ENCODE measurements at regions of chr15 and their contacts with region 1.

Region 1: DNA sequence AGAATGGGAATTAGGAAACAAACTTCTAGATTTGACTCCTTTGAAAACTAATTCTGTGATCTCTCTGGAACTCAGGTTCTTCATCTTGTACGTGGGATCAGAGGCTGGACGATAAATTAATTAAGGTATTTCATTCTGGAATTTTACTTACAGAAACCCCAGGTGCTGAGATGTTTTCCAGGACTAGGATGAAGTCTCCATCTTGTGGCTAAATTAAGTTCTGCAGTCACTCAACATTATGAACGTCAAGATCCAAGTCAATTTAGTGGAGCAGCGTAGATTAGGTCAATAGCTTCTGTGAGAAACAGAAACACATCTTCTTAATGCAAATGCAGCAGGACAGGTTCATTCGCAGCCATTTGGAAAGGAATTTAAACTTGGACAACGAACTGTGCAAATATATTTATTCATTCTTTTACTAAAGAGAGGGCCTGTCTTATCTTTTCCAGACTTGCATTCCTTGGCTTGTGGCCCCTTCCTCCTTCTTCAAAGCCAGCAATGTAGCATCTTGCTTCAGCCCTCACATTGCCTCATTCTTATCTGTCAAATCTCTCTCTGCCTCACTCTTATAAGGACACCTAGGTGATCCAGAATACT is 26.7 kb upstream of the TMC3 start:
- DNase-seq: no peak
- H3K4me3 ChIP-seq: no peak overlapping the region
- H3K27ac ChIP-seq: no peak overlapping the region
- H3K4me1 ChIP-seq: no peaks in the 10 kb centered on the region
- H3K27me3 ChIP-seq: no peaks in the 10 kb centered on the region
- CTCF ChIP-seq: peak; percentile 56 to 82 (median 70)

Region 2: DNA sequence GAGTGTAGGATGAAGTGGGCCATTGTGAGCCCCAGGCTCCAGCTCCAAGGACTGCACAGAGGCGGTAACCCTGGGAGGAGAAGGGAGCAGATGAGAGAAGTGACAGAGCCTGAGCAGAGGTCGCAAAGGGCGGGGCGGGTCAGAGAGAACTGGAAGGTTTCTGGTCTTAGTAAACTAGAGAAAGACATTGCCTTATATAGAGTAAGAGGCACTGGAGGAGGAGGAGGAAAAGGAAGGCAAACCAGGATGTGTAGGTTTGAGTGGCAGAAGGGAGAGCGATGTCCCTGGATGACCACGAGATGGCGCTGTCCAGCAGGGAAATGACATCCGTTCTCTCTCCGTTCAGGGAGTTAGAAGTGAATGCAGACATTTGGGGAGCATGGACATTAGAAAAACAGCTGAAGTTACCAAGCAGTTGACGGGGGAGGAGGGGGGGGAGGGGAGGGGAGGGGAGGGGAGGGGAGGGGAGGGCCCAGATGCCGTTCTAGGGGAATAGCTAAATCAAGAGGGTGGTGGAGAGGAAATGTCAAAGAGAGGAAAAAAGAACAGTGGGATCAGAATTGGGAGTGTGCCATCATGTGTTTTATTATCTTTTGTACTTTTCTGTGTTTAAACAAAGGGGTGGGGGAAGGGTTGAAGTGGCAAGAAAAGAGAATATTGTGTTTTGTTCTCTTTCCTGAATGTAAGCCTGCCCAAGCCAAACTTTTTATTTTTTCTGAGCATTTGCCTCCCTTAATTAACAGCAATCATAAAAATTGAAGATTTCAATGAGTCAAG is 125.6 kb before region 1 on chr15:
- intact Hi-C with region 1: loop called (anchors 1 kb)
- DNase-seq: peak in 1 of 2 donors; percentile 78
- H3K4me3 ChIP-seq: no peak overlapping the region
- H3K27ac ChIP-seq: peak overlapping the region; percentile 3 to 36
- H3K4me1 ChIP-seq: peaks cover 0 to 8% of the 10 kb centered on the region in 2 donors
- H3K27me3 ChIP-seq: no peaks in the 10 kb centered on the region
- CTCF ChIP-seq: peak; percentile 71 to 87 (median 77)

Region 3: DNA sequence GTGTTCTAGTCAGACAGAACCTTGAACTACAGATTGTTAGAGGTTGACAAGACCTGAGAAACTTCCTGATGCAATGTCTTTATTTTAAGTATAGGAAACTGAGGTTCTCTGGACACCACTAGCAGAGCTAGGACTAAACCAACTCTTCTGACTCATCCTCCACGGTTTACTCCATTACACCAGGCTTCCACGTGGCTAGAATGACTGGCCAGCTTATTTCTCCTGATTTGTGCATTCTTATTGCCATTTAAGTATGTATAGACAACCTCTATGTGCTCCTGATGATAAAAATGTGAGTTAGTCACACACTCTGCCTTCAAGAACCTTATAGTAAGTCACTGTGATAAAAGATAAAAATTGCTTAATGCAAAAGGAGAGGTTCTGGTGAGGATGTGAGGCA is 462.4 kb after region 1 on chr15:
- intact Hi-C with region 1: no loop called
- DNase-seq: no peak
- H3K4me3 ChIP-seq: no peak overlapping the region
- H3K27ac ChIP-seq: no peak overlapping the region
- H3K4me1 ChIP-seq: no peaks in the 10 kb centered on the region
- H3K27me3 ChIP-seq: no peaks in the 10 kb centered on the region
- CTCF ChIP-seq: no peak

Measured in ascending aorta (tissue), 2 donors.